Common myeloid progenitor, CD34-positive (primary cell): ENCODE measurements at regions of chr9 and their contacts with region 1.

Region 1: DNA sequence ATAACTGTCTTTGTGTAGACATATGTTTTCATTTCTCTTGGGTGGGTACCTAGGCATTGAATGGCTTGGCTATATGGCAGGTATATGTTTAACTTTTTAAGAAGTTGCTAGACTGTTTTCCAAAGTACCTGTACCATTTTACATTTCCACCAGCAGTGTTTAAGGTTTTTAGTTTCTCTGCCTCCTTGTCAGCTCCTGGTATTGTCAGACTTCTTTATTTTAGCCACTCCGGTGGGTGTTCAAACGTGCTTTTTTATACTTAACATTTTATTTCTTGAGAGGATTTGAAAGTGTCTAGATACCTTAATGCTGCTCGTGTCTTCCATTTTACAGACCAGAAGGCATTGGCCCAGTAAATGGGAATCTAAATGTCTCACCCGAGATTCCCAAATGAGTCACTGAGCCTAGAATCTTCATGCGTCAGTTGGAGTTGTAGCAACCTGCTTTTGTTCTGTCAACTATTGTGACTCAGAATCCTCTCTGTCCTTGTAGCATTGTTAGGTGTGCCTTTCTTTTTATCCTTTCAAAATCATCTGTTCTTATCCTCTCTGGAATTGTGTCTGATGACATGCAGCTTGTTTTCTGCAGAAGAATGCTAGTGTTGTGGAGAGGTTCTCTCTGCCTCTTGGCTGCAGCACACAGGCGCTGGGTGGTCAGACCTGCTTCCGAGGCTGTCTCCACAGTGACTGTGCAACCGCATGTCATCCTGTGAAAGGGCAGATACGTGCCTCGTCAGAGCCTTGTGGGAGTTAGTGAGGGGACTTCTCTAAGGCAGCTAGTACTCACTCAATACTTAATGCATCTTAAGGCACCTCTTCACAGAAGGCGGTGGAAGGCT is 291.8 kb downstream of the AOPEP start:
- DNase-seq: peak; percentile 84 to 97 (median 94)
- H3K4me3 ChIP-seq: peak overlapping the region in 1 of 7 experiments; percentile 45
- H3K27ac ChIP-seq: peak overlapping the region; percentile 5 to 29
- H3K4me1 ChIP-seq: peaks cover 0 to 27% (median 10%) of the 10 kb centered on the region in 4 experiments
- H3K27me3 ChIP-seq: no peaks in the 10 kb centered on the region

Region 2: DNA sequence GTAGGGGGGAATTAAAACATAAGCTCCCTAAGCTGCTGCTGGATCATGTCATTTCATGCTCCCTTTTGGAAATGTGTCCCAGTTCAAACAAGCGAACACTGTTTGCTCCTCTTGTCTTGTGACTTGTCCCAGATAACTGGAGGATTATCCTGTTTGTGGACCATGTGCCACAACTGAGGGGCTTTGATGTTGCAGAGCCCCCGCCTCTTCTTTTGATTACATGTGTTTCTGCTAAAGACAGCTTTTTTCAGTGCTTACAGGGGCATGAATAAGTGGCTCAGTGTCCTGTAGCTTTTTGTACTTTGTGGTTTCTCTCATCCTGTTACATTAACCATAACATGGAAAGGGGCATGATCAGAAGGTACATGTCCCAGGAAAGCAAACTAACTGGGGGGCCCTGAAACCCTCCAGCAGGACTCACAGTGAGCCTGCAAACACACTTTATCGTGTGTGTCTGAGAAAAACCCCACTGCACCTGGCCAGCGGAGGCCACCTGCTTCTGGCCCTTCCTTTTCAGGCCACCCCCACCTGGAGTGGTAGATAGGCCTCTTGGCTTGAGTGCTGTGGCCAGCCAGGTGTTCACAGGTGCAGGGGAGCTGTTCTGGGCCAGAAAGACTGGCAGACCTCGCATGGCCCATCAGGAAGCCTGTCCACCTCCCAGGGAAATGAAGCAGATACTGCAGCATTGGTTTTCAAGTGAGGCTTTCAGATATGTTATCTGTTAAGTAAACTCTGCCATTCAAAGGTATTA is 13.6 kb after region 1 on chr9:
- CTCF ChIA-PET with region 1: interaction called, 20 read pairs
- POLR2A ChIA-PET with region 1: no interaction called
- DNase-seq: no peak
- H3K4me3 ChIP-seq: peak overlapping the region in 1 of 7 experiments; percentile 25
- H3K27ac ChIP-seq: no peak overlapping the region
- H3K4me1 ChIP-seq: peaks cover 0 to 38% (median 15%) of the 10 kb centered on the region in 4 experiments
- H3K27me3 ChIP-seq: no peaks in the 10 kb centered on the region